ENCODE measurements at regions of chr13 and their contacts with region 1.

Region 1: DNA sequence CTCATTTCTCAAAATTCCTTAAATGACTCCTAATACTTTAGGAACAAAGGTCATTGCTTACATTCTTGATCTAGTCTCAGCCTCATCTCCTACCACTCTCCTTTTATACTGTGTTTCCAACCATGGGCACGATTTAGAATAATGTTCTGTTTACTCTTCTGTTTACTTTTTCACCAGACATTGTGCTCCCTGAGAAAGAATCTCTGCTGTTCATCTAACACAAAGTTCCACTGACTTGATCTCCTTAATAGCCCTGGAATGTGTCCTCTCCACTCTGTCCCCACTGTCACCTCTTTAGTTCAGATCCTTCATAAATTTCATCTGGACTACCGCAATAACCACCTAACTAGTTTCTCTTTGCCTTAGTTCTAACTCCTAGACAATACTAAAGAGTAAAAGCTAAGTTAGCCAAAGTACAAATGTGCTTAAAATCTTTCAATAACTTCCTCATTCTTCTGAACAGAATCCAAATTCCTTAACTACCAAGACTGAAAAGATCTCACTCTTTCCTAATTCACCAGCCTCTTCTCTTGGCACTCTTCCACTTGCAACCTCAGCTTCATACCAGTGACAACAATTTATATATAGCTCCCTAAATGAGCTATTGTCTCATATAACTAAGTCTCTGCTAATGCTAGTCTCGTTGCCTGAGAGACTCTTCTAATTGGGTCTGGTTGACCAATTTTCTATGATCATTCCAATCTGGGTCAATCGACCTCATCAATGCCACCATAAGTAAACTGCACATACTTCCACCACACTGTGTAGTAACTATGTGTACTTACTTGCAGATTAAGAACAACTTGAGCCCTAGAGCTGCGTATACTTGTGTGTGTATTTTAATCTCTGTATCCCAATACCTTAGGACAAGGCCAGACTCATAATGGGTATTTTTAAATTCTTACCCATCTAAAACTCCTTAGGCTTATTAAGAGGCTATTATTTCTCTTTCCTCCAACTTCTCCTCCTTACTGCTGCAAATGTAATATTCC is 179.9 kb downstream of the VWA8 start:
- DNase-seq: no peak
- ATAC-seq: peak; percentile 25 to 64 (median 47)
- H3K4me3 ChIP-seq: no peak overlapping the region
- H3K27ac ChIP-seq: peak overlapping the region in 7 of 12 donors; percentile 0 to 57 (median 33)
- H3K4me1 ChIP-seq: peaks cover 0 to 41% (median 18%) of the 10 kb centered on the region in 12 donors
- H3K27me3 ChIP-seq: no peaks in the 10 kb centered on the region
- CTCF ChIP-seq: no peak
- POLR2A ChIP-seq: no peak

Region 2: GRCh38 chr13:41720839-41721561 is 60.0 kb before region 1 on chr13:
- intact Hi-C with region 1: no loop called
- DNase-seq: no peak
- ATAC-seq: no peak
- H3K4me3 ChIP-seq: no peak overlapping the region
- H3K27ac ChIP-seq: no peak overlapping the region
- H3K4me1 ChIP-seq: peaks cover 0 to 7% (median 0%) of the 10 kb centered on the region in 12 donors
- H3K27me3 ChIP-seq: no peaks in the 10 kb centered on the region
- CTCF ChIP-seq: no peak
- POLR2A ChIP-seq: no peak

Region 3: GRCh38 chr13:41848435-41849255 is 67.6 kb after region 1 on chr13:
- intact Hi-C with region 1: loop called in 1 of 10 experiments (anchors 10 kb)
- DNase-seq: no peak
- ATAC-seq: peak; percentile 39 to 74 (median 71)
- H3K4me3 ChIP-seq: no peak overlapping the region
- H3K27ac ChIP-seq: peak overlapping the region in 7 of 12 donors; percentile 4 to 56 (median 24)
- H3K4me1 ChIP-seq: peaks cover 0 to 19% (median 5%) of the 10 kb centered on the region in 12 donors
- H3K27me3 ChIP-seq: no peaks in the 10 kb centered on the region
- CTCF ChIP-seq: peak in 6 of 12 donors; percentile 19 to 46 (median 32)
- POLR2A ChIP-seq: no peak

Measured in heart left ventricle (tissue), 16 donors.